ENCODE measurements at regions of chr11 and their contacts with region 1.

Region 1: GRCh38 chr11:7612661-7613393 is 60.5 kb downstream of the CYB5R2 start:
- DNase-seq: peak; percentile 40 to 96
- H3K4me3 ChIP-seq: peak overlapping the region; percentile 13; the same call in 1 of the 2 replicates
- H3K27ac ChIP-seq: peak overlapping the region; percentile 85
- H3K4me1 ChIP-seq: peaks cover 38% of the 10 kb centered on the region
- H3K27me3 ChIP-seq: no peaks in the 10 kb centered on the region
- CTCF ChIP-seq: no peak

Region 2: GRCh38 chr11:7657306-7658025 is 44.6 kb after region 1 on chr11:
- CTCF ChIA-PET with region 1: no interaction called
- POLR2A ChIA-PET with region 1: no interaction called
- intact Hi-C with region 1: loop called (anchors 5 kb)
- DNase-seq: peak; percentile 31 to 53
- H3K4me3 ChIP-seq: no peak overlapping the region
- H3K27ac ChIP-seq: no peak overlapping the region
- H3K4me1 ChIP-seq: no peaks in the 10 kb centered on the region
- H3K27me3 ChIP-seq: no peaks in the 10 kb centered on the region
- CTCF ChIP-seq: peak; percentile 65

Region 3: GRCh38 chr11:7927635-7928034 is 314.8 kb after region 1 on chr11:
- CTCF ChIA-PET with region 1: no interaction called
- POLR2A ChIA-PET with region 1: no interaction called
- intact Hi-C with region 1: no loop called
- DNase-seq: no peak
- H3K4me3 ChIP-seq: no peak overlapping the region
- H3K27ac ChIP-seq: no peak overlapping the region
- H3K4me1 ChIP-seq: no peaks in the 10 kb centered on the region
- H3K27me3 ChIP-seq: no peaks in the 10 kb centered on the region
- CTCF ChIP-seq: no peak

Measured in PC-9 (cell line).